ENCODE measurements at regions of chr10 and their contacts with region 1.

Region 1: GRCh38 chr10:61271127-61271823 is 181.9 kb downstream of the TMEM26 start:
- DNase-seq: peak; percentile 100
- ATAC-seq: peak; percentile 100
- H3K4me3 ChIP-seq: peak overlapping the region; percentile 3; the same call in 1 of the 2 replicates
- H3K27ac ChIP-seq: peak overlapping the region; percentile 1; the same call in 1 of the 2 replicates
- H3K4me1 ChIP-seq: peaks cover 14% of the 10 kb centered on the region
- H3K27me3 ChIP-seq: no peaks in the 10 kb centered on the region
- CTCF ChIP-seq: peak; percentile 99

Region 2: DNA sequence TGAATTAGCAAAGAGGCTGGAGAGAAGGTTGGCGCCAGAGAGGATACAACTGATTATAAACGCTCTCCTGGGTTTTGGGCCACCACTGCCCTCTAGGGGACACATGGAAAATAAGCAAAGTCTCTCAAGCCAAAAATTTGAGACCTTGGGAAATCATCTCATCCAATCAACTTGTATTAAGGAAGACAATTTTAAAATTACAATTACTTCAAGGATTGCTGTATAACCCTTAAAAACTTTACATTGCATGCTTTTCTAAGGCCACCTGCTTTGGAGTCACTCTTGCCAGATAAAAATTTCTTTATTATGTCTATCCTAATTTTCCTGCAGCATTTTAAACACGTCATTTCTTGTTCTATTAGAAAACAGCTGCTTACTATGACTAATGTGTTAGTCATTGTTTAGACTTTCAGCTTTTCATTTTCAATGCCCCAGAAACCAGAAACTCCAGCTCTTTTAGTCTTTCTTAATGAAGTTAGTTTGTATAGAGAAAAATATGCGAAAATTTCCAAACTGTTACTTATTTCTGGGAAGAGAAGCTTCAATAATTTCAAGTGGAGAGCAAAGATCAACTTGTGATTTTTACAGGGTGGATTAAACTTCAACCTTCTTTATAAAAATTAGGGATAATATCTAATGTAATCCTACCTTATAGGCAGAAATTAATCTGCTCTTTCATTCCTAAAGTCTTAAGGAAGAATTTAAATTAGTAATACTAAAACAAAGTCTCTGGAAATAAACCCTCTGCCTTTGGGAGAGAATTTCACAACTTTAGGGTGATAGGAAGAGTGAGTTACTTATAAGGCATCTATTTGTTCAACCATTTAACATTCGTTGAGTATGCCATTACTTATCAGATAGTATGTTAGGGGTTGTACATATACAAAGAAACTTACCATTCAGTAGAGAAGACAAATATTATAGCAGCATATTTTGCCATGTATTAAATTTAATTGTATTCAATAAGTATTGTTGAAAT is 306.7 kb before region 1 on chr10:
- CTCF ChIA-PET with region 1: no interaction called
- POLR2A ChIA-PET with region 1: no interaction called
- intact Hi-C with region 1: loop called (anchors 5 kb)
- DNase-seq: peak; percentile 98
- ATAC-seq: peak; percentile 86
- H3K4me3 ChIP-seq: peak overlapping the region; percentile 24
- H3K27ac ChIP-seq: peak overlapping the region; percentile 44
- H3K4me1 ChIP-seq: peaks cover 37% of the 10 kb centered on the region
- H3K27me3 ChIP-seq: no peaks in the 10 kb centered on the region
- CTCF ChIP-seq: peak; percentile 100

Region 3: GRCh38 chr10:61188691-61189090 is 82.6 kb before region 1 on chr10:
- CTCF ChIA-PET with region 1: interaction called, 3 read pairs
- POLR2A ChIA-PET with region 1: no interaction called
- intact Hi-C with region 1: loop called (anchors 2 kb)
- DNase-seq: peak; percentile 16
- ATAC-seq: peak; percentile 61
- H3K4me3 ChIP-seq: no peak overlapping the region
- H3K27ac ChIP-seq: no peak overlapping the region
- H3K4me1 ChIP-seq: no peaks in the 10 kb centered on the region
- H3K27me3 ChIP-seq: no peaks in the 10 kb centered on the region
- CTCF ChIP-seq: no peak

Region 4: GRCh38 chr10:61257956-61258496 is 13.2 kb before region 1 on chr10:
- CTCF ChIA-PET with region 1: no interaction called
- POLR2A ChIA-PET with region 1: no interaction called
- intact Hi-C with region 1: no loop called
- DNase-seq: peak; percentile 79
- ATAC-seq: peak; percentile 64
- H3K4me3 ChIP-seq: no peak overlapping the region
- H3K27ac ChIP-seq: no peak overlapping the region
- H3K4me1 ChIP-seq: peaks cover 24% of the 10 kb centered on the region
- H3K27me3 ChIP-seq: no peaks in the 10 kb centered on the region
- CTCF ChIP-seq: no peak

Region 5: DNA sequence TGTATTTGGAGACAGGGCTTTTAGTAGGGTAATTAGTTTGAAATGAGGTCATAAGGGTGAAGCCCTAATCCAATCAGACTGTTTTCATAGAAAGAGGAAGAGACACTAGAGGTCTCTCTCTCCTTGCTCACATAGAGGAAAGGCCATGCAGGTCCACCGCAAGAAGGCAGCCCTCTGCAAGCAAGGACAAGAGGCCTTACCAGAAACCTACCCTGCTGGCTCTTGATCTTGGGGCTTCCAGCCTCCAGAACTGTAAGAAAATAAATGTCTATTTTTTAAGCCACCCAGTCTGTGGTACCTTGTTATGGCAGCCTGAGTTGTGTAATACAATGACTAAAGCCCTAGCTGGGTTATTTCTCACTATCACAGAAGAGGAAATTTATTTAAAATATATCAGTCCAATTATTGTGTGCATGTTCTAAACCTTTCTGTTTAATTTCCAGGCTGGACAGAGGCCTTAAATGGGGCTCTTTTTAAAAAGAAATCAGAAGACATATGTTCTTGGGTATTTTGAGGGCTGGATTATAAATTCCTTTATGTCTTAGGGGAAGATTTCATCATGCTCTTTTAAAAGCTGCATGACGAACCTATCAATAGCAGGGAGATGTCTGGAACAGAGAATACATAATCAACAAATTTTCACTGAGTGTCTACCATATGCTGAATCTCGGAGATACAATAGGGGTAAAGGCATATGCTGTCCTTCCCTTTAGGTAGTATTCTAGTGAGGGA is 194.8 kb after region 1 on chr10:
- CTCF ChIA-PET with region 1: interaction called, 5 read pairs
- POLR2A ChIA-PET with region 1: no interaction called
- intact Hi-C with region 1: loop called (anchors 2 kb)
- DNase-seq: no peak
- ATAC-seq: no peak
- H3K4me3 ChIP-seq: no peak overlapping the region
- H3K27ac ChIP-seq: no peak overlapping the region
- H3K4me1 ChIP-seq: peaks cover 29% of the 10 kb centered on the region
- H3K27me3 ChIP-seq: no peaks in the 10 kb centered on the region
- CTCF ChIP-seq: peak; percentile 53

Region 6: GRCh38 chr10:61592581-61592980 is 321.3 kb after region 1 on chr10:
- CTCF ChIA-PET with region 1: interaction called, 4 read pairs
- POLR2A ChIA-PET with region 1: no interaction called
- intact Hi-C with region 1: loop called (anchors 1 kb)
- DNase-seq: peak; percentile 91
- ATAC-seq: peak; percentile 83
- H3K4me3 ChIP-seq: no peak overlapping the region
- H3K27ac ChIP-seq: no peak overlapping the region
- H3K4me1 ChIP-seq: peaks cover 18% of the 10 kb centered on the region
- H3K27me3 ChIP-seq: no peaks in the 10 kb centered on the region; the same call in 1 of the 2 replicates
- CTCF ChIP-seq: peak; percentile 100

Region 7: GRCh38 chr10:61896854-61897661 is 625.8 kb after region 1 on chr10:
- CTCF ChIA-PET with region 1: no interaction called
- POLR2A ChIA-PET with region 1: no interaction called
- intact Hi-C with region 1: loop called (anchors 2 kb)
- DNase-seq: peak; percentile 91
- ATAC-seq: no peak; the same call in 1 of the 2 replicates
- H3K4me3 ChIP-seq: no peak overlapping the region
- H3K27ac ChIP-seq: no peak overlapping the region
- H3K4me1 ChIP-seq: peaks cover 38% of the 10 kb centered on the region
- H3K27me3 ChIP-seq: no peaks in the 10 kb centered on the region
- CTCF ChIP-seq: peak; percentile 99